ENCODE measurements at regions of chr11 and their contacts with region 1.

Region 1: DNA sequence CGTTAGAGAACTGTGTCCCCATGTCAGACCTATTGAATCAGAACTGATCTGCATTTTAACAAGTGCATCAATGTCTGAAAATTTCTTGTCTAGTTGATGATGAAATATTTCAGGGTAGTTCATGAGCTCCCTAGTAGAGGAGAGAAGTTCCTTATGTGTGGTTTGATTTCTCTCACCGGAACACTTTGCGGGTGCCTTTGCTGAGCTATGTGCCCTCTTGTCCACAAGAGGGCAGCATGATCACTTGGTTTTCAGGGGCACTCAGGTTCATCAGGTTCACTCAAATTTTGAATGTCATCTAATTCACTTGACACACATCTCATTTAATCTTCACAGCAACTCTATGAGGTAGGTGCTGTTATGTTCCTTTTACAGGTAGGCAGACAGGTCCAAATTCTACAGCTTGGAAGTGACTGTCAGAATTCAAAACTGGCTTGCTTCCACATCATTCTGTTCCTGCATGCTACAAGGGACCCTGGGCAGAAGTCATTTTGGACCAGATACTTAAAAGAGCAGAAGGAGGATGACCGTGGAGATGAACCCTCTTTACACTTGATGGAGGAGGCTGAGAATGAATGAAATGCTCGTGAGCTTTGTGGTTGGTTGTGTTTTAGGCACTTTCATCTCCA is 55.6 kb downstream of the P4HA3 start:
- DNase-seq: peak; percentile 25 to 74 (median 53)
- ATAC-seq: peak; percentile 73
- H3K4me3 ChIP-seq: no peak overlapping the region
- H3K4me3 Mint-ChIP-seq: no peak overlapping the region
- H3K27ac ChIP-seq: no peak overlapping the region
- H3K27ac Mint-ChIP-seq: peak overlapping the region; percentile 19
- H3K4me1 ChIP-seq: no peaks in the 10 kb centered on the region
- H3K4me1 Mint-ChIP-seq: peaks cover 5% of the 10 kb centered on the region
- H3K27me3 ChIP-seq: no peaks in the 10 kb centered on the region
- H3K27me3 Mint-ChIP-seq: no peaks in the 10 kb centered on the region
- CTCF ChIP-seq: peak; percentile 75

Region 2: DNA sequence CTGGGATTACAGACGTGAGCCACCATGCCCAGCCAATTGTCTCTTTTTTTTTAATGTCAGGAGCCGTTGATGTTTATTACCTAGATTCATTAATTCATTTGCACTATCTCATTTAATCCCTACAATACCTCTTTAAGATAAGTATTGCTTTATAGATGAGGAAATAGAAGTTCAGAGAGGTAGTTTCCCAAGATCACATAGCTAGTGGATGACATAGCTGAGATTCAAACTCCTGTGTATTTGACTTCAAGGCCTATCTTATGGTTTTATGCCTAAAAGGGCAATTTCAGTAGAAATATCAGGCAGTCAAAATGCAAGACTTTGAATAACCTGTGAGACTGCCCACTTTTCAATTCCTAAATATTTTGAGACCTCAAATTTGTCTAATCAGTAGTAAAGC is 18.3 kb before region 1 on chr11:
- CTCF ChIA-PET with region 1: interaction called, 13 read pairs
- POLR2A ChIA-PET with region 1: interaction called, 4 read pairs
- intact Hi-C with region 1: no loop called
- DNase-seq: no peak
- ATAC-seq: no peak
- H3K4me3 ChIP-seq: no peak overlapping the region
- H3K4me3 Mint-ChIP-seq: no peak overlapping the region
- H3K27ac ChIP-seq: no peak overlapping the region
- H3K27ac Mint-ChIP-seq: no peak overlapping the region
- H3K4me1 ChIP-seq: peaks cover 9% of the 10 kb centered on the region
- H3K4me1 Mint-ChIP-seq: peaks cover 6% of the 10 kb centered on the region
- H3K27me3 ChIP-seq: no peaks in the 10 kb centered on the region
- H3K27me3 Mint-ChIP-seq: no peaks in the 10 kb centered on the region
- CTCF ChIP-seq: no peak

Region 3: DNA sequence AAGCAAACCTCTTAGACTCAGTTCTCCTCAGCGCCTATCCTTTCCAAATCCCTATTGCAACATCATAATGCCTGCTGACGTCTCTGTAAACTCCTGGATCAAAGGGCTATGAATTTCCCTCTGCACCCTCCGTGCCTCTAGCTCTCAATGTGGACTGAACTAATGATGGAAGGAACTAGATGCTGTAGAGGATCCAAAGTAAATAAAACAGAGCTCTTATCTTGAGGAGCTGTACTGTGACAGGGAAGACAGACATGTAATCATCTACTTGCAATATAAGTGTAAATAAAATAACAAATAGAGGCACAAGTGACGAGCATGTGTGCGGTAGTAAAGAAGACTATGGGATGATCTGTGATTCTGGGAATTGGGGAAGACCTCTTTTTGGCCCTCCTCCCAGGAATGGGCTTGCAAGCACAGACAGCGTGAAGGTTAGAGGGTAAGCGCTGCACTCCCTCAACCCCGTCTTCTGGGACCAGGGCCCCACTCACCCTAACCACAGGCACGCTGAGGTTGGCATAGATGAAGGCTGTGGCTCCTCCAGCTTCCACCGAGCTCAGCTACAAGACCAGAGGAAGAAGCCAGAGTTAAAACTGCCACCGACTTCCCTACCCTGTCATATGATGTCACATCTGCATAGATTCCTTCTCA is 13.4 kb after region 1 on chr11:
- CTCF ChIA-PET with region 1: interaction called, 18 read pairs
- POLR2A ChIA-PET with region 1: no interaction called
- intact Hi-C with region 1: no loop called
- DNase-seq: peak in 5 of 9 experiments; percentile 3 to 48 (median 19)
- ATAC-seq: peak; percentile 46
- H3K4me3 ChIP-seq: no peak overlapping the region
- H3K4me3 Mint-ChIP-seq: no peak overlapping the region
- H3K27ac ChIP-seq: no peak overlapping the region
- H3K27ac Mint-ChIP-seq: no peak overlapping the region
- H3K4me1 ChIP-seq: peaks cover 13% of the 10 kb centered on the region
- H3K4me1 Mint-ChIP-seq: peaks cover 19% of the 10 kb centered on the region
- H3K27me3 ChIP-seq: no peaks in the 10 kb centered on the region
- H3K27me3 Mint-ChIP-seq: peaks cover 12% of the 10 kb centered on the region
- CTCF ChIP-seq: no peak

Region 4: DNA sequence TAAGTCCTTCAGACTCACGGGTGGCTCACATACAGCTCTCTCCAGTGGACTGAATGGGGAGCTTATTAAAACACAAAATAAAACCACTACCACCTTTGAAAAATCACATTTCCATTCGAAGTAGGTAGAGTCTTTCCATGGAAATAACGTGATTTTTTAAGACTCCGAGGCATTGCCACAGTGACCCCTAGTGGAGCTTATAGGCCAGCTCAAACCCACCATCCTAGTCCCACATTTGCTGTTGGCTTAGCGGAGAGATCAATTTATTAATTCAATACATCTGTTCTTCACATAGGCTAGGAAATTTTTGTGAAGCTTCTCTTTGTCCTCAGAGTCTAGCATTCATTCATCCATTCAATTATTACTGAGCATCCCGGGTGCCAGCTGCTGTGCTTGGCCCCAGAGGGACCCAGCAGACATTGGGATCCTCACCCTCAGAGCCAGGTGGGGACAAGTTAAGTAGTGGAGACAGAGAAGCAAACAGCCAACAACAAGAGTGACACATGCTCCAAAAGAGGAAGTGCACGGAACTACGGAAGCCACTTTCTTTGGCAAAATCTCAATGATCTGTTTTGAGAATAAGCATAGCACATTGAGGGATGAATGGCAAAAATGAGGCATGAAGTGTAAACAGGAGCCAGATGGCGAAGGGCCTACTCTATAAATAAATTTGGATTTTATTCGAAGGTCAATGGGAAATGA is 65.8 kb after region 1 on chr11:
- CTCF ChIA-PET with region 1: interaction called, 11 read pairs
- POLR2A ChIA-PET with region 1: no interaction called
- intact Hi-C with region 1: loop called (anchors 1 to 2 kb)
- DNase-seq: peak in 3 of 9 experiments; percentile 16 to 46 (median 22)
- ATAC-seq: no peak
- H3K4me3 ChIP-seq: no peak overlapping the region
- H3K4me3 Mint-ChIP-seq: no peak overlapping the region
- H3K27ac ChIP-seq: no peak overlapping the region
- H3K27ac Mint-ChIP-seq: no peak overlapping the region
- H3K4me1 ChIP-seq: no peaks in the 10 kb centered on the region
- H3K4me1 Mint-ChIP-seq: no peaks in the 10 kb centered on the region
- H3K27me3 ChIP-seq: peaks cover 0 to 2% of the 10 kb centered on the region in 2 experiments
- H3K27me3 Mint-ChIP-seq: peaks cover 4% of the 10 kb centered on the region
- CTCF ChIP-seq: peak; percentile 63

Region 5: DNA sequence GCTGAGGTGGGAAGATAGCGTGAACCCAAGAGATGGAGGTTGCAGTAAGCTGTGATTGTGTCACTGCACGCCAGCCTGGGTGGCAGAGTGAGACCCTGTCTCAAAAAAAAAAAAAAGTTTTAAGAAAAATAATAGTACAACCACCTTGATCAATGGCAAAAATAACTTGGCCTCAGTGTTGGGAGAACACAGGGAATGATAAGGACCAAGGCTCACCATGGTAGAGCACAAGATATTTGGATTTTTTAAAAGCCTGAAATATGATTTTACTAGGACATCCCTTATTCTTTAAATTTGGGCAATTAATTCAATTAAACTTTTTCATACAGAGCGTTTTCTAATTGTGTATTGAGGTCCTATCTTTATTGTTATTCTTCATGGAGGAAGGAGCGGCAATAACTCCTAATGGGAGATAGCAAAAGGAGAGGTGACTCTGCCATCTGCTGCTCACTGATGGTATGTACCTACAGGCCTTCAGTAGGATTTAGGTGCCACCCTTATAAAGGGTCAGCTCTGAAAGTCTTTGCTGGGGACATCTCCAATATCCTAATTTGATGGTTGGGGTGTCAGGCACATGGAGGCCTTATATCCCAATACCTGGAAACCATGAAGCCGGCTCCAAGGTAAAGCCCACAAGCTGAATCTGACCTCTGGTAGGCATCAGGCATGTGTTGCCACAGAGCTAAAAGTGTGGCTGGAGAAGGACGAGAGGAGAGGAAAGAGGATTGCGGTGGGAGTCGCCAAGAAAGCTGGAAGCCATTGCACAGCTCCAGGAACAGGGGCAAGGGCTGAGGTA is 314.6 kb after region 1 on chr11:
- CTCF ChIA-PET with region 1: interaction called, 8 read pairs
- POLR2A ChIA-PET with region 1: no interaction called
- intact Hi-C with region 1: loop called (anchors 2 to 5 kb)
- DNase-seq: peak in 4 of 9 experiments; percentile 7 to 49 (median 23)
- ATAC-seq: no peak
- H3K4me3 ChIP-seq: no peak overlapping the region
- H3K4me3 Mint-ChIP-seq: no peak overlapping the region
- H3K27ac ChIP-seq: no peak overlapping the region
- H3K27ac Mint-ChIP-seq: no peak overlapping the region
- H3K4me1 ChIP-seq: no peaks in the 10 kb centered on the region
- H3K4me1 Mint-ChIP-seq: no peaks in the 10 kb centered on the region
- H3K27me3 ChIP-seq: no peaks in the 10 kb centered on the region
- H3K27me3 Mint-ChIP-seq: peaks cover 7% of the 10 kb centered on the region
- CTCF ChIP-seq: peak; percentile 45

Region 6: GRCh38 chr11:74641289-74641688 is 385.4 kb after region 1 on chr11:
- CTCF ChIA-PET with region 1: no interaction called
- POLR2A ChIA-PET with region 1: no interaction called
- intact Hi-C with region 1: no loop called
- DNase-seq: no peak
- ATAC-seq: no peak
- H3K4me3 ChIP-seq: no peak overlapping the region
- H3K4me3 Mint-ChIP-seq: no peak overlapping the region
- H3K27ac ChIP-seq: no peak overlapping the region
- H3K27ac Mint-ChIP-seq: no peak overlapping the region
- H3K4me1 ChIP-seq: no peaks in the 10 kb centered on the region
- H3K4me1 Mint-ChIP-seq: no peaks in the 10 kb centered on the region
- H3K27me3 ChIP-seq: no peaks in the 10 kb centered on the region
- H3K27me3 Mint-ChIP-seq: no peaks in the 10 kb centered on the region
- CTCF ChIP-seq: no peak